ENCODE measurements at regions of chr19 and their contacts with region 1.

Region 1: DNA sequence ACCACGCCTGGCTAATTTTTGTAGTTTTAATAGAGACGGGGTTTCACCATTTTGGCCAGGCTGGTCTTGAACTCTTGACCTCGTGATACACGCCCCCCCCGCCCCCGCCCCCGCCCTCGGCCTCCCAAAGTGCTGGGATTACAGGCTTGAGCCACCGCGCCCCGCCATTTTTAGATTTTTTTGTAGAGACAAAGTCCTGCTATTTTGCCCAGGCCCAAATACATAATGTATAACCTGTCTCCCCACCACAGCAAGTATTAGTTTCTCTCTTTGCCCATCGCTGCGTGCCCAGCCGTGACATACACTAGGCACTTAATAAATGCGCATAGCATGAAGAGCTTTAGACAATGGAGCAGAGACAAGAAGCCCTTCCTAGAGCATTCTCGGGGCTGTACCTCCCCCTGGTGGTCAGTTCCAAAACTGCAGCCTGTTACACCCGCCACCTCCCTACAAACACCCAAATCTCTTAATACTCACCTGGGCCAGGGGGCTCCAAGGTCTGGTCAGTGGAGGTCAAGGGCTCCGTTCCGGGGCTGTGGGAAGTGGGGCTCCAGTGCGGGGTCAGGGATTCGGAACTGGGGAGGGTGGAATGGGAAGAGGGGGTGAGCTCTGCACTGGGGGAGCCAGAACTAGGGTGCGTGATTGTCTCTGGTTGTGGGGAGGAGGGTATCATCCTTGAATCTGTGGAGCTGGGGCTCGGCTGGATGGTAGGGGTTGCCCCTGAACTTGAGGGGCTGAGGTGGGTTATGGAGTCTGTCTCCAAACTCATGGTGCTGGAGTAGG is 22.5 kb downstream of the IQCN start:
- DNase-seq: peak; percentile 70 to 97
- H3K4me3 ChIP-seq: no peak overlapping the region
- H3K27ac ChIP-seq: no peak overlapping the region
- H3K4me1 ChIP-seq: peaks cover 5 to 16% (median 13%) of the 10 kb centered on the region in 4 experiments
- H3K27me3 ChIP-seq: peaks cover 0 to 3% (median 0%) of the 10 kb centered on the region in 4 experiments; a peak in 3 of 7 replicates
- CTCF ChIP-seq: peak; percentile 86 to 96 (median 93)
- EP300 ChIP-seq: no peak
- POLR2A ChIP-seq: no peak
- RAD21 ChIP-seq: peak; percentile 99

Region 2: GRCh38 chr19:18007917-18008673 is 243.7 kb before region 1 on chr19 and contains the start of gene ARRDC2:
- CTCF ChIA-PET with region 1: no interaction called
- POLR2A ChIA-PET with region 1: no interaction called
- DNase-seq: peak; percentile 71 to 86
- H3K4me3 ChIP-seq: peak within 1 kb of the TSS; percentile 19 to 75 (median 62)
- H3K27ac ChIP-seq: no peak within 1 kb of the TSS
- H3K4me1 ChIP-seq: peaks cover 0 to 11% (median 4%) of the 10 kb centered on the region in 4 experiments; a peak in 5 of 7 replicates
- H3K27me3 ChIP-seq: no peaks in the 10 kb centered on the region
- CTCF ChIP-seq: no peak
- EP300 ChIP-seq: no peak
- POLR2A ChIP-seq: peak in 1 of 2 experiments; percentile 63; a peak in 1 of 3 replicates
- RAD21 ChIP-seq: no peak
- total RNA-seq, gene ARRDC2: 6.2 and 6.9 TPM in 2 replicates

Region 3: GRCh38 chr19:18128044-18128443 is 123.7 kb before region 1 on chr19:
- CTCF ChIA-PET with region 1: no interaction called
- POLR2A ChIA-PET with region 1: no interaction called
- DNase-seq: no peak
- H3K4me3 ChIP-seq: no peak overlapping the region
- H3K27ac ChIP-seq: no peak overlapping the region
- H3K4me1 ChIP-seq: no peaks in the 10 kb centered on the region
- H3K27me3 ChIP-seq: no peaks in the 10 kb centered on the region
- CTCF ChIP-seq: no peak
- EP300 ChIP-seq: no peak
- POLR2A ChIP-seq: no peak
- RAD21 ChIP-seq: no peak

Region 4: DNA sequence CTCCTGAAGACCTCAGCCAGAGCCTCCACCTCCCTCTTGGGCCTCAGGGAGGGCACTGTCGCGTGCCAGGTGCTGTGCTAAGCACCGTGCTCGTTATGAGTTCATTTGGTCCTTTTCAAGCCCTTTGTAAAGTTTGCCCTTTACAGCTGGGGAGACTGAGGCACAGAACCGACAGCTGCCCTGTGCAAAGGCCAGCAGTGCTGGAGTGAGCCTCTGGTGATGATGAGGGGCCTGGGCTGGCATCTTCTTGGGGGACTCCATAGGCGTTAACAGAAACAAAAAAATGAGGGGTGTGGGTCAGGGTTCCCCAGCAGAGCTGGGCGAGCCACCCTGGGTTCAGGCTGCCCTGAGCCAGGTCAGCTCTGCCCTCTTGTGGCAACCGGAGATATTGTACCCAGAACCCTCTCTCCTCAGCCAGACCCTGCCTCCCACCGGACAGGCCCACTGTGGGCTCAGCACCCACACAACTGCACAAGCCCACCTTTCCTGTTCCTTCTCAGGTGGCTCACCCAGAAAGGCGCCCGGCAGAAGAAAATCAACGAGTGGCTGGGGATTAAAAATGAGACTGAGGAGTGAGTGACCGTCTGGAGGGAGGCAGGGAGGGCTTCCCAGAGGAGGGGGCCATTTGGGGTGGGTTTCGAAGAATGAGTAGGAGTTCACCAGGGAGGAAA is 83.7 kb before region 1 on chr19:
- CTCF ChIA-PET with region 1: interaction called, 11 read pairs
- POLR2A ChIA-PET with region 1: interaction called, 3 read pairs
- DNase-seq: peak in 1 of 2 experiments; percentile 84
- H3K4me3 ChIP-seq: no peak overlapping the region
- H3K27ac ChIP-seq: no peak overlapping the region
- H3K4me1 ChIP-seq: peaks cover 0 to under 1% (median 0%) of the 10 kb centered on the region in 4 experiments; a peak in 2 of 7 replicates
- H3K27me3 ChIP-seq: no peaks in the 10 kb centered on the region
- CTCF ChIP-seq: peak; percentile 89 to 92 (median 90)
- EP300 ChIP-seq: no peak
- POLR2A ChIP-seq: no peak
- RAD21 ChIP-seq: peak; percentile 82 to 87

Region 5: DNA sequence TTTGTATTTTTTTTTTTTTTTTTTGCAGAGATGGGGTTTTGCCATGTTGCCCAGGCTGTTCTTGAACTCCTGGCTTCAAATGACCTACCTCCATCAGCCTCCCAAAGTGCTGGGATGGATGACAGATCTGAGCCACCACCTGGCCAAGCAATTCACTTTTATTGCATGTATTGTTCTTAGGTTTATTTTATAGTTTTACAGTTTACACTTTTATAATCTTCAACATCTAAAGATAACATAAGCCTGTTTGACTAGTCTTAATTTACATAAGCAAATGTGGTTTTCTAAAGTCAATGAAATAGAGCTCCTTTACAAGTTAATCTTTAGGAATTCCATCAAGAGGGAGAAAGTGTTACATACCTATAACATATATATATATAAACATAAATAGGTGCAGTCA is 68.2 kb before region 1 on chr19:
- CTCF ChIA-PET with region 1: interaction called, 21 read pairs
- POLR2A ChIA-PET with region 1: no interaction called
- DNase-seq: no peak
- H3K4me3 ChIP-seq: no peak overlapping the region
- H3K27ac ChIP-seq: no peak overlapping the region
- H3K4me1 ChIP-seq: peaks cover 0 to 5% (median 1%) of the 10 kb centered on the region in 4 experiments; a peak in 4 of 7 replicates
- H3K27me3 ChIP-seq: no peaks in the 10 kb centered on the region
- CTCF ChIP-seq: no peak
- EP300 ChIP-seq: no peak
- POLR2A ChIP-seq: no peak
- RAD21 ChIP-seq: no peak

Region 6: GRCh38 chr19:18203863-18204393 is 47.9 kb before region 1 on chr19 and contains the start of gene RAB3A:
- CTCF ChIA-PET with region 1: interaction called, 305 read pairs
- POLR2A ChIA-PET with region 1: interaction called, 65 read pairs
- DNase-seq: peak; percentile 97 to 100
- H3K4me3 ChIP-seq: peak within 1 kb of the TSS; percentile 56 to 83 (median 78)
- H3K27ac ChIP-seq: peak within 1 kb of the TSS; percentile 76
- H3K4me1 ChIP-seq: peaks cover 0 to 11% (median 7%) of the 10 kb centered on the region in 4 experiments; a peak in 5 of 7 replicates
- H3K27me3 ChIP-seq: no peaks in the 10 kb centered on the region; a peak in 1 of 7 replicates
- CTCF ChIP-seq: peak in 2 of 3 experiments; percentile 14 to 20; a peak in 1 of 4 replicates
- EP300 ChIP-seq: no peak
- POLR2A ChIP-seq: no peak
- RAD21 ChIP-seq: no peak
- total RNA-seq, gene RAB3A: 14.2 and 14.3 TPM in 2 replicates

Region 7: DNA sequence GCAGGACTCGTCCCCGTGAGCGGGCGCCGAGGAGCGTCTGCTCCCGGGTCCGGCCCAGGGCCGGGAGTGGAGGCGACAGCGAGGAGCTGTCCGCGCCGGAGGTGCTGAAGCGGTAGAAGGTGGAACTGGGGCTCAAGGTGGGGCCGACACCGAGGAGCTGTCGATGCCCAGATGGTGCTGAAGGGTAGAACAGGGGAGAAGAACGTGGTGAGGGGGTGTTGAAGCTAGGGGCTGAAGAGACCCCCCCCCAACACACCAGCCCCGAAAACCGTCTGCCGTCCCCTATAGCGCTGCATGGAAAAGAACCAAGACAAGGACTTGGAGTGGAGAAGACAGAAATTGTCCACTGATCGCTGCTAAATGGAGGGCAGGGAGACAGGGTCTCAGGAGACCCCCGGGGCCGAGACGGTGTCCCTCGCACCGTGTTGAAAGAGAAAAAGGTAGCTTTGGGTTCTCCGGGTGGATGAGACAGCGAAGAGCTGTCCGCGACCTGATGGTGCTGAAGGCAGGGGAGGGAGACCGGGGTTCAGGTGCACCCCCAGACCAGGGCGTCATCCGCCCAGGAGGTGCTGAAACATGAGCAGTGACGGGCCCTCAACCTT is 18.5 kb before region 1 on chr19:
- CTCF ChIA-PET with region 1: interaction called, 140 read pairs
- POLR2A ChIA-PET with region 1: interaction called, 19 read pairs
- DNase-seq: peak in 1 of 2 experiments; percentile 95
- H3K4me3 ChIP-seq: peak overlapping the region; percentile 11 to 54 (median 32); a peak in 7 of 8 replicates
- H3K27ac ChIP-seq: no peak overlapping the region
- H3K4me1 ChIP-seq: peaks cover 6 to 20% (median 14%) of the 10 kb centered on the region in 4 experiments
- H3K27me3 ChIP-seq: no peaks in the 10 kb centered on the region
- CTCF ChIP-seq: no peak
- EP300 ChIP-seq: peak in 1 of 2 experiments; percentile 18; a peak in 1 of 3 replicates
- POLR2A ChIP-seq: no peak
- RAD21 ChIP-seq: no peak

Region 8: GRCh38 chr19:18269070-18269723 is 17.4 kb after region 1 on chr19:
- CTCF ChIA-PET with region 1: interaction called, 172 read pairs
- POLR2A ChIA-PET with region 1: interaction called, 6 read pairs
- DNase-seq: no peak
- H3K4me3 ChIP-seq: no peak overlapping the region
- H3K27ac ChIP-seq: no peak overlapping the region
- H3K4me1 ChIP-seq: no peaks in the 10 kb centered on the region; a peak in 2 of 7 replicates
- H3K27me3 ChIP-seq: no peaks in the 10 kb centered on the region
- CTCF ChIP-seq: no peak
- EP300 ChIP-seq: no peak
- POLR2A ChIP-seq: no peak
- RAD21 ChIP-seq: no peak

Region 9: GRCh38 chr19:18408053-18408476 is 156.3 kb after region 1 on chr19:
- CTCF ChIA-PET with region 1: interaction called, 25 read pairs
- POLR2A ChIA-PET with region 1: no interaction called
- DNase-seq: peak in 1 of 2 experiments; percentile 86
- H3K4me3 ChIP-seq: no peak overlapping the region
- H3K27ac ChIP-seq: no peak overlapping the region
- H3K4me1 ChIP-seq: no peaks in the 10 kb centered on the region
- H3K27me3 ChIP-seq: no peaks in the 10 kb centered on the region
- CTCF ChIP-seq: peak; percentile 63 to 82 (median 72)
- EP300 ChIP-seq: no peak
- POLR2A ChIP-seq: no peak
- RAD21 ChIP-seq: peak; percentile 62 to 69